ENCODE measurements at regions of chr15 and their contacts with region 1.

Region 1: GRCh38 chr15:89003865-89004725 is 84.2 kb upstream of the ABHD2 start:
- DNase-seq: no peak
- H3K4me3 ChIP-seq: no peak overlapping the region
- CTCF ChIP-seq: peak; percentile 82

Region 2: DNA sequence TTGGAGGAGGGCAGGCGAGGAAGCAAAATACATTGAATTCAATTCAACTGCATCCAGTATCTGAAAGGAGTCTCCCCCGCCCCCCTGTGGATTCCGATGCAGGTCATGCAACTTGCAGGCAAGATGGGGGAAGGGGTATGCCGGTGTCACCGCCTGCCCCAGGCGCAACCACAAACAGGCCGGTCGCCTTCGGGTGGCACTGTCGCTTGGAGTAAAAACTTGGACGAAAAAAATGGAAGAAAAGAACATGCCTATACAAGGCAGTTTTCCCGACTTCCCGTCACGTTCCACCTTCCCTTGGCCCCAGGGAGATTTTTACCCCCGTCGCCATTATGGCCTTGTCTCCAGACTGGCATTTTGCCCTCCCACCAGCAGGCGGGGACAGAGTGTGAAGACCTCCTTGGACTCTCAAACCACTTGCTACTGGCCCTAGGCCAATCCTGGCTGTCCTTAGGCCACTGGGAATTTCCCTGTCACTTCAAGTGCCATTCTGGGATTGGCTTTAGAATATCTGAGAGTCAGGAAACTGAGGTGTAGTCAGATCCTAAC is 745.9 kb before region 1 on chr15:
- CTCF ChIA-PET with region 1: no interaction called
- POLR2A ChIA-PET with region 1: no interaction called
- DNase-seq: no peak
- H3K4me3 ChIP-seq: no peak overlapping the region
- CTCF ChIP-seq: no peak

Region 3: GRCh38 chr15:88865498-88866099 is 138.5 kb before region 1 on chr15:
- CTCF ChIA-PET with region 1: no interaction called
- POLR2A ChIA-PET with region 1: no interaction called
- DNase-seq: no peak
- H3K4me3 ChIP-seq: no peak overlapping the region
- CTCF ChIP-seq: no peak

Region 4: GRCh38 chr15:88913017-88913849 is 90.9 kb before region 1 on chr15 and contains the start of gene MFGE8:
- CTCF ChIA-PET with region 1: interaction called, 17 read pairs
- POLR2A ChIA-PET with region 1: interaction called, 22 read pairs
- DNase-seq: no peak
- H3K4me3 ChIP-seq: peak within 1 kb of the TSS; percentile 65
- CTCF ChIP-seq: peak; percentile 0

Region 5: GRCh38 chr15:88918738-88919137 is 85.4 kb before region 1 on chr15:
- CTCF ChIA-PET with region 1: interaction called, 17 read pairs
- POLR2A ChIA-PET with region 1: interaction called, 22 read pairs
- DNase-seq: peak; percentile 99
- H3K4me3 ChIP-seq: no peak overlapping the region
- CTCF ChIP-seq: no peak

Region 6: GRCh38 chr15:88989578-88989977 is 14.5 kb before region 1 on chr15:
- CTCF ChIA-PET with region 1: interaction called, 19 read pairs
- POLR2A ChIA-PET with region 1: interaction called, 3 read pairs
- DNase-seq: peak; percentile 96
- H3K4me3 ChIP-seq: no peak overlapping the region
- CTCF ChIP-seq: no peak

Region 7: GRCh38 chr15:89017370-89018066 is 13.4 kb after region 1 on chr15:
- CTCF ChIA-PET with region 1: interaction called, 14 read pairs
- POLR2A ChIA-PET with region 1: no interaction called
- DNase-seq: peak; percentile 69
- H3K4me3 ChIP-seq: peak overlapping the region; percentile 45
- CTCF ChIP-seq: peak; percentile 82

Measured in AG04449 (cell line).